Activated CD8-positive, alpha-beta T cell treated with anti-CD3 and anti-CD28 coated beads, Interleukin-2, amount 10 ng/mL, durations not matched to agents 7 days and 5 days (primary cell): ENCODE measurements at regions of chr6 and their contacts with region 1.

Region 1: DNA sequence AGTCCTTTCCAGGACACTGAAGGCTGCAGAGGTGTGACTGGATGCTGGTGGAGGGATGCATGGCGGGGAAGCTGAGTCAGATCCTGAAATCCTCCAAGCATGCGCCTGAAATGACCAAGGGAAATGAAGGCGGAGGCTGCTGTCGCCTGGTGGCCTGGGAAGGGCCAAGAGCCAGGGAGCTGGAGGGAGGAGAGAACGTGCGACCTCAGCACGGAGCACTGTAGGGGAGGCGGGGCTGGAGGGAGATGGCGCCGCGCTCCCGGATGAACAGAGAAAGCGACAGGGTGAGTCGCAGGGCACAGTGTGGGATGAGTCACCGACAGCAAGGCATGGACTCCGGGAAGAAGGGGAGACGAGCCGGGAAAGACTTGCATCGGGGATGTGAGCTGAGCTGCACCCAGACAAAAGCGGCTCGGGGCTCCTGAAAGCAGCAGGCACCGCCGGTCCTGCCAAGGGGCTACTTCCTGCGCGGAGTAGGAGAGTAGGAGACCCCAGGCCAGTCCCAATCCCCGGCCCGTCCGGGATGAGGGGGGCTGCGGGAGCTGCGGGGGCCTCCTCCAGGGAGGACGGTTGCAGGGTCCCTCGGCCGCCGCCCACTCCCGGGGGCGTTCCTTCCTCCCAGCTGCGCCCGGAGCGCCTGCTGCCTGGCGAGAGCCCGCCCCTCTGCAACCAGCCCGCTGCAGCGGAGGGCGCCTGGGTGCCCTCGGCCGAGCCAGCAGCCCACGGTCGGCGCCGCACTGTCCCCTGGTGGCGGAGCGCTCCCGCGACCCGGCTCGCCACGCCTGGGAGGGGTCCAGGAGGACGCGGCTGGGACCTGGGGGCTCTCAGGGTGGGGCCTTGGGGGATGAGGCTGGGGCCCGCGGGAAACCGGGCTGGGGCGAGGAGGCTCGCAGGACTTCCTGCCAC is 11.0 kb upstream of the NQO2 start:
- DNase-seq: peak; percentile 83
- ATAC-seq: peak; percentile 79
- H3K4me3 Mint-ChIP-seq: peak overlapping the region; percentile 87
- H3K27ac Mint-ChIP-seq: peak overlapping the region; percentile 96
- H3K4me1 Mint-ChIP-seq: peaks cover 25% of the 10 kb centered on the region
- H3K27me3 Mint-ChIP-seq: peaks cover 4% of the 10 kb centered on the region

Region 2: DNA sequence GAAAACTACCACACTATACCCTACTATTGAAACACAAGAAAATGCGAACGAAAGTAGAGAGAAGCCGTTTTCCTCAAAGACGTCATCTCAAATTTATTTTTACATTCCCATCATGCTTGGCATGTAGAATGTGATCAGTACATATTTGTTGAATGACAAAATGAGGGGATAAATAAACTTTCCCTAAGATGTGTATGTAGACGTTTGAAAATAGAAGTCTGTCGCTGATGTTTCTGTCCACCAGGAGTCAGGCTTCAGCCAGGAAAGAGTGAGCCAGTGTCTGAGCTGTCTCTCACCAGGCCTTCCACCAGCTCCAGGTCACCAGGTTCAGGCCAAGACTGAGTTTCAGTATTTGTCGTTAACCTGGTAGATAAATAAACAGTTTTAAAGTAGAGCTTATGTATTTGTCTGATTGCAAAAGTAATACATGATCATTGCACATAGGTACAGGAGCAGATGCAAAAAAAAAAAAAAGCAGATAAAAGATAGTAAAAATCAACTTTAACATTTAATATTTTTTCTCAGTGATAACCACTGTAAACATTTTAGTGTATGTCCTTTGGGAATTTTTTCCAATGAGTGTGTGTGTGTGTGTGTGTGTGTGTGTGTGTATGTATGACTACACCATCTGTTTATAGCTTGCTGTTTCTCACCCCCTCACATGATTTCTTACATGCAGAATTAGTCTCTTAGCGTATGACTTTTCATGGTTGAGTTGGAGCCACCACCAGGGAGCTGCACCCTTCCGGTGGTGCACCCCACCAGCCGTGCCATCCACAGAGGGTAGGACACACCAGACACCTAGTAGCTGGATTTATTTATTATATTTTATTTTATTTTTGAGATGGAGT is 197.3 kb before region 1 on chr6:
- CTCF ChIA-PET with region 1: interaction called, 53 read pairs
- POLR2A ChIA-PET with region 1: interaction called, 4 read pairs
- DNase-seq: peak; percentile 74
- ATAC-seq: peak; percentile 76
- H3K4me3 Mint-ChIP-seq: no peak overlapping the region
- H3K27ac Mint-ChIP-seq: peak overlapping the region; percentile 47
- H3K4me1 Mint-ChIP-seq: peaks cover 31% of the 10 kb centered on the region
- H3K27me3 Mint-ChIP-seq: no peaks in the 10 kb centered on the region

Region 3: DNA sequence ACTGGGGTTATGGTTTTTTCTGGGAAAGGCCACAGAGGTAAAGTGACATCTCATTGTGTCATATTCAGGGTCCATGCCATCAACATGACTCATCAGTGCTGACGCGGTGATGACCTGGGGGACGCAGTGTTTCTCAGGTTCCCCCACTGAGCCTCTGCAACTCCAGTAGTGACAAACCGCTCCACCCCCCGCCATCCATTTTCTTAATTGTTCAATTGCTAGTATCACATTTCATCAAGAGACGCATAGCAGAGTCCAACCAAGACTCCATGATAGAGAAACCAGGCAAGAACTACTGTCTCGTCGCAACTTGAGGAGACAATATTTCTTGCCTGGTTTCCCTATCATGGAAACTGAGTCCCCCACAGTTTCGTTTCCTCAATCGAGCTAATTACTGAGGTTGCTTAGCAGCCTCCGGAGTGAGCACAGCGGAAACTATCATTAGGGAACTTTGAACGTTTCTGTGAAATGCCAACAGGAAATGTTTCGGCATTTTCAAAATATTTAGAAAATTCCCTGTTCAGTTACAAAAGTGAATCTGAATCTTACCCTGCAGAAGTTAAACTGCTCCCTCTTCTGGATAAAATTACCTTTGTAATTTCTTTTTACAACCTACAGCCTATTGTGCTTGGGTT is 134.8 kb before region 1 on chr6:
- CTCF ChIA-PET with region 1: interaction called, 21 read pairs
- POLR2A ChIA-PET with region 1: interaction called, 19 read pairs
- DNase-seq: peak; percentile 87
- ATAC-seq: peak; percentile 57
- H3K4me3 Mint-ChIP-seq: peak overlapping the region; percentile 55
- H3K27ac Mint-ChIP-seq: peak overlapping the region; percentile 91
- H3K4me1 Mint-ChIP-seq: peaks cover 76% of the 10 kb centered on the region
- H3K27me3 Mint-ChIP-seq: no peaks in the 10 kb centered on the region

Region 4: DNA sequence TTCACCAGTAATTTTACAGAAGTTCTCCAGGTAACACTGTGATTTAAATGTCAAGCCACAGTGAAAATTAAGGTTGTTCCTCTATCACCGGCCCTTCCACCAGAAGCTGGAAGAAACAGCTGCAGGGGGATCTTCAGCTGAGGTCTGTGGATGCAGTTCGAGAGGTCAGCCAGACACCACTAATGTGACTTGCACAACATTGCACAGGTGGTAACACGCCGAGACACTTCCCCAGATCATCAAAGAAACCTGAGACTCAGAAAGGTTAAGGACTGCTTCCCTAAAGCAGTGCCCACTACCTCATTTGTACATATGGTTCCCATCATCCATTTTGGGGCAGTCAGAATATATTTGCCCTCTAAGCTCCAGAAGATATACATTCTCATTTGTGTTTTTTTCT is 77.5 kb before region 1 on chr6:
- CTCF ChIA-PET with region 1: interaction called, 12 read pairs
- POLR2A ChIA-PET with region 1: interaction called, 3 read pairs
- DNase-seq: no peak
- ATAC-seq: no peak
- H3K4me3 Mint-ChIP-seq: no peak overlapping the region
- H3K27ac Mint-ChIP-seq: no peak overlapping the region
- H3K4me1 Mint-ChIP-seq: peaks cover 41% of the 10 kb centered on the region
- H3K27me3 Mint-ChIP-seq: no peaks in the 10 kb centered on the region

Region 5: DNA sequence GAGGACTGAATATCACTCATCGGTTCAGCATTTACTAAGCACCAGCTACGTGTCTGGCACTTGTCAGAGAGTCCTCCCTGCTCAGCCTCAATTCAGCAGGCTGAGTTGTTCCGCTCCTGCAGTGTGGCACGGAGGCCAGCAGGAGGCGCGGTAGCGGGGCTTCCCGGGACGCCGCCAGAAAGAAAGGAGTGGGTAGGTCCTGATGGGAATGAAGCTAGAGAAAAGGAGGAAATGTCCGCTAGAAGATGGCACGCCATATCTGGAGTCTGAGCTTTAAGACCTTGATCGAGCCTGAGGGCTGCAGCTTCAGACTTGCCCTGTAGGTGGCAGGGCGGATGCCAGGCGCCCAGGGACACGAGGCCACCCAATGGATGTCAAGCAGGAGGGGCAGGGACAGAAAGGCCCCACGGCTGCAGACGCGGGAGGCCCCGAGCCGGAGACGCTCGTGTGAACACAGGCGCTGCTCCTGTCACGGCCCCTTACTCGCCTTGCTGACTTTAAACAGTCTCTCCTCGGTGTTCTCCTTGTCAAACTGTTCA is 36.1 kb before region 1 on chr6:
- CTCF ChIA-PET with region 1: interaction called, 74 read pairs
- POLR2A ChIA-PET with region 1: interaction called, 5 read pairs
- DNase-seq: peak; percentile 73
- ATAC-seq: peak; percentile 92
- H3K4me3 Mint-ChIP-seq: peak overlapping the region; percentile 18
- H3K27ac Mint-ChIP-seq: peak overlapping the region; percentile 49
- H3K4me1 Mint-ChIP-seq: peaks cover 14% of the 10 kb centered on the region
- H3K27me3 Mint-ChIP-seq: no peaks in the 10 kb centered on the region

Region 6: DNA sequence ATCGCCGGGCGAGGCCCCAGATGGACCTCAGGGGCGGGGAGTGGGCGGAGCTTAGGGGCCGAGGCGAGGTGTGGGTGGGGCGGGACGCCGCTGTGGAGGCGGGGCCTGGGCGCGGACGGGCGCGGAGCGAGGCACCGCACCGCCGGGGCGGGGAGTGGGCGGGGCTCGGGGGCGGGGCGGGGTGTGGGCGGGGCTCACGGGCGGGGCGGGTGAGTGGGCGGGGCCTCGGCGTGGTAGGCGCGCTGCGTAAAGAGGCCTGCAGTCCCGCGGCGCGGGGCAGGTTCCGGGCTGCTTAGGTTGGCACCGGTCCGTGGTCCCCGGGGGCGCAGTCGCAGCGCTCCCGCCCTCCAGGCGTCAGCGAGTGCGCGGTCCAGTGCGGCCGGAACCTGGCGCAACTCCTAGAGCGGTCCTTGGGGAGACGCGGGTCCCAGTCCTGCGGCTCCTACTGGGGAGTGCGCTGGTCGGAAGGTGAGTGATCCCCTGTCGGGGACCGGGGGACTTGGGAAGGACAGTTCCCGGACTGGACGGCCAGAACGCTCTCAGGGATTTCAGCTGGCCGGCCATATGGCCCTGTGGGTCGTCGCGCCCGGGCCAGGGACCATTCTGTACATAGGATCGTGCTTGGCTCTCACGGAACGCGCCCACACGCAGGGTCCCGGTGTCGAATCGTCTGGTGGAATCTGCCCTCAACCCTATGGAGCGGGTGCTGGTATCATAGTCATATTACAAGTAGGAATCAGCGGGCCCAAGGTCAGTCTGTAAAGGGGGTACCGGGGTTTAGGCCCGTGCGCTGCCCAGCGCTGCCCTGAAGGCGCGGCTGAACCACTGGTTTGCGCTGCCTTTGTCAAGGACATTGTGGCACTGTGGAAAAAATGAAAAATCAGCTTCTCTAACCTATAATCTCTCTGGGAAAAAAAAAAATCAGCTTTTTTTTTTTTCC is 11.2 kb after region 1 on chr6 and contains the start of gene NQO2:
- CTCF ChIA-PET with region 1: interaction called, 48 read pairs
- POLR2A ChIA-PET with region 1: interaction called, 22 read pairs
- DNase-seq: peak; percentile 93
- ATAC-seq: peak; percentile 89
- H3K4me3 Mint-ChIP-seq: peak within 1 kb of the TSS; percentile 86
- H3K27ac Mint-ChIP-seq: peak within 1 kb of the TSS; percentile 83
- H3K4me1 Mint-ChIP-seq: peaks cover 35% of the 10 kb centered on the region
- H3K27me3 Mint-ChIP-seq: no peaks in the 10 kb centered on the region
- total RNA-seq, gene NQO2: 21.2 to 21.4 TPM